GM12878 (cell line): ENCODE measurements at regions of chr7 and their contacts with region 1.

Region 1: GRCh38 chr7:27774717-27775328 is 34.9 kb downstream of the TAX1BP1 start:
- DNase-seq: no peak
- ATAC-seq: peak; percentile 52; the same call in 1 of the 3 replicates
- H3K4me3 ChIP-seq: no peak overlapping the region
- H3K27ac ChIP-seq: no peak overlapping the region
- H3K4me1 ChIP-seq: no peaks in the 10 kb centered on the region
- H3K27me3 ChIP-seq: no peaks in the 10 kb centered on the region
- CTCF ChIP-seq: peak; percentile 57 to 61 (median 57); a peak in 5 of 6 replicates
- EP300 ChIP-seq: no peak
- POLR2A ChIP-seq: no peak
- RAD21 ChIP-seq: peak; percentile 50

Region 2: GRCh38 chr7:26515314-26515842 is 1259.4 kb before region 1 on chr7:
- CTCF ChIA-PET with region 1: no interaction called
- POLR2A ChIA-PET with region 1: no interaction called
- RAD21 ChIA-PET with region 1: no interaction called
- SMC1A ChIA-PET with region 1: no interaction called
- in situ Hi-C with region 1: no loop called
- intact Hi-C with region 1: no loop called
- DNase-seq: no peak
- ATAC-seq: no peak
- H3K4me3 ChIP-seq: no peak overlapping the region
- H3K27ac ChIP-seq: no peak overlapping the region
- H3K4me1 ChIP-seq: no peaks in the 10 kb centered on the region
- H3K27me3 ChIP-seq: no peaks in the 10 kb centered on the region; a peak in 1 of 4 replicates
- CTCF ChIP-seq: no peak
- EP300 ChIP-seq: no peak
- POLR2A ChIP-seq: no peak
- RAD21 ChIP-seq: no peak

Region 3: GRCh38 chr7:27576360-27576944 is 198.4 kb before region 1 on chr7:
- CTCF ChIA-PET with region 1: interaction called, 13 read pairs
- POLR2A ChIA-PET with region 1: no interaction called
- RAD21 ChIA-PET with region 1: no interaction called
- SMC1A ChIA-PET with region 1: interaction called, 4 read pairs
- in situ Hi-C with region 1: no loop called
- intact Hi-C with region 1: loop called (anchors 10 kb)
- DNase-seq: no peak
- ATAC-seq: peak; percentile 76
- H3K4me3 ChIP-seq: no peak overlapping the region
- H3K27ac ChIP-seq: no peak overlapping the region
- H3K4me1 ChIP-seq: no peaks in the 10 kb centered on the region
- H3K27me3 ChIP-seq: no peaks in the 10 kb centered on the region
- CTCF ChIP-seq: peak; percentile 48 to 55 (median 53); a peak in 5 of 6 replicates
- EP300 ChIP-seq: no peak
- POLR2A ChIP-seq: no peak
- RAD21 ChIP-seq: peak; percentile 59

Region 4: DNA sequence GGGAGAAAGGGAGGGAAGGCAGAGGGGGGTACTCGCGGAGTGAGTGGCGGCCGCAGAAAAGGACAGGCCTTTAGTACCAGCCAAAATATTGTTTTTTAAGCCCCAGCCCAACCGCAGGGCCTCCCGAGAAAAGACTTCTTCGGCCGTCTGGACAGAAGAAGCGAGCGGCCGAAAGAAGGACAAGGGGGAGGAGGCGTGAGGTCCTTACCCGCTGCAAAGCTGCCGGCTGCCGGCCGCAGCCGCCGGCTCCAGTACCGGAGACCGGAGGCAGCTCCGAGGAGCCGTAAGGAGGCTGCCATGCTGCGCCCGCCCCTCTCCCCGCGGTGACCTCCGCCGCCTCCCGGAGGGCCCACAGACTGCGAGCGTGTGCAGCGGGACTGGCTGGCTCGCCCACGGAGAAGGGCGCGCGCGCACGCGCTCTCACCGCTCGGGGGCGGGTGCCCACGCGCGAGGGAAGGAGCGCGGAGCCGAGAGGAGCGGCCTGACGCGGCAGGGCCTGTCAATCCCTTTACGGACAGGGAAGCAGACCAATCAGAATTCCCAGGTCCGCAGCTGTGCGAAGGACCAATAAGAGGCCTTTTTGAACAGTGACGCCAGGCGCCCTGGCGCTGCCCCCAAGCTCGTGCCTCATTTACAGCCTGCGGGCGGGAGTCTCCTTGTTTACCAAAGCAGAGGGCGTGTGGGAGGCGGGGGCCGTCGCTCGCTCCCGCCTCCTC is 112.2 kb before region 1 on chr7 and contains the start of gene HIBADH:
- CTCF ChIA-PET with region 1: interaction called, 13 read pairs
- POLR2A ChIA-PET with region 1: no interaction called
- RAD21 ChIA-PET with region 1: interaction called, 7 read pairs
- SMC1A ChIA-PET with region 1: interaction called, 10 read pairs
- in situ Hi-C with region 1: no loop called
- intact Hi-C with region 1: no loop called
- DNase-seq: peak; percentile 94
- ATAC-seq: peak; percentile 99
- H3K4me3 ChIP-seq: peak within 1 kb of the TSS; percentile 92
- H3K27ac ChIP-seq: peak within 1 kb of the TSS; percentile 62
- H3K4me1 ChIP-seq: no peaks in the 10 kb centered on the region
- H3K27me3 ChIP-seq: no peaks in the 10 kb centered on the region
- CTCF ChIP-seq: 0 out of 6 replicates have a peak, but pooled peaks of 1 of the 3 experiments have one; percentile 2
- EP300 ChIP-seq: 0 out of 4 replicates have a peak, but pooled peaks of 1 of the 2 experiments have one; percentile 30
- POLR2A ChIP-seq: peak; percentile 93
- RAD21 ChIP-seq: no peak
- polyA plus RNA-seq, gene HIBADH: 8.7 to 9.2 TPM

Region 5: GRCh38 chr7:27723085-27723484 is 51.7 kb before region 1 on chr7:
- CTCF ChIA-PET with region 1: interaction called, 10 read pairs
- POLR2A ChIA-PET with region 1: no interaction called
- RAD21 ChIA-PET with region 1: no interaction called
- SMC1A ChIA-PET with region 1: interaction called, 3 read pairs
- in situ Hi-C with region 1: no loop called
- intact Hi-C with region 1: no loop called
- DNase-seq: no peak
- ATAC-seq: peak; percentile 56; the same call in 2 of the 3 replicates
- H3K4me3 ChIP-seq: no peak overlapping the region
- H3K27ac ChIP-seq: no peak overlapping the region
- H3K4me1 ChIP-seq: no peaks in the 10 kb centered on the region; the same call in 1 of the 2 replicates
- H3K27me3 ChIP-seq: no peaks in the 10 kb centered on the region; a peak in 1 of 4 replicates
- CTCF ChIP-seq: peak in 2 of 3 experiments; percentile 4 to 7; a peak in 1 of 6 replicates
- EP300 ChIP-seq: no peak
- POLR2A ChIP-seq: no peak
- RAD21 ChIP-seq: no peak

Region 6: GRCh38 chr7:27745064-27745583 is 29.7 kb before region 1 on chr7:
- CTCF ChIA-PET with region 1: interaction called, 32 read pairs
- POLR2A ChIA-PET with region 1: interaction called, 6 read pairs
- RAD21 ChIA-PET with region 1: interaction called, 15 read pairs
- SMC1A ChIA-PET with region 1: interaction called, 33 read pairs
- in situ Hi-C with region 1: no loop called
- intact Hi-C with region 1: no loop called
- DNase-seq: no peak
- ATAC-seq: peak; percentile 21; the same call in 2 of the 3 replicates
- H3K4me3 ChIP-seq: no peak overlapping the region
- H3K27ac ChIP-seq: no peak overlapping the region
- H3K4me1 ChIP-seq: no peaks in the 10 kb centered on the region
- H3K27me3 ChIP-seq: no peaks in the 10 kb centered on the region
- CTCF ChIP-seq: peak; percentile 46 to 64 (median 55); a peak in 5 of 6 replicates
- EP300 ChIP-seq: no peak
- POLR2A ChIP-seq: no peak
- RAD21 ChIP-seq: peak; percentile 58